Activated T-helper 2 cell treated with anti-CD3 and anti-CD28 coated beads, Interferon-gamma antibody, Interleukin-2, Interleukin-4, amounts not matched to agents 10 μg/mL and 5 μg/mL and 100 μg/mL, durations not matched to agents 14 hours and 24 hours and 36 hours (primary cell): ENCODE measurements at regions of chr6 and their contacts with region 1.

Region 1: DNA sequence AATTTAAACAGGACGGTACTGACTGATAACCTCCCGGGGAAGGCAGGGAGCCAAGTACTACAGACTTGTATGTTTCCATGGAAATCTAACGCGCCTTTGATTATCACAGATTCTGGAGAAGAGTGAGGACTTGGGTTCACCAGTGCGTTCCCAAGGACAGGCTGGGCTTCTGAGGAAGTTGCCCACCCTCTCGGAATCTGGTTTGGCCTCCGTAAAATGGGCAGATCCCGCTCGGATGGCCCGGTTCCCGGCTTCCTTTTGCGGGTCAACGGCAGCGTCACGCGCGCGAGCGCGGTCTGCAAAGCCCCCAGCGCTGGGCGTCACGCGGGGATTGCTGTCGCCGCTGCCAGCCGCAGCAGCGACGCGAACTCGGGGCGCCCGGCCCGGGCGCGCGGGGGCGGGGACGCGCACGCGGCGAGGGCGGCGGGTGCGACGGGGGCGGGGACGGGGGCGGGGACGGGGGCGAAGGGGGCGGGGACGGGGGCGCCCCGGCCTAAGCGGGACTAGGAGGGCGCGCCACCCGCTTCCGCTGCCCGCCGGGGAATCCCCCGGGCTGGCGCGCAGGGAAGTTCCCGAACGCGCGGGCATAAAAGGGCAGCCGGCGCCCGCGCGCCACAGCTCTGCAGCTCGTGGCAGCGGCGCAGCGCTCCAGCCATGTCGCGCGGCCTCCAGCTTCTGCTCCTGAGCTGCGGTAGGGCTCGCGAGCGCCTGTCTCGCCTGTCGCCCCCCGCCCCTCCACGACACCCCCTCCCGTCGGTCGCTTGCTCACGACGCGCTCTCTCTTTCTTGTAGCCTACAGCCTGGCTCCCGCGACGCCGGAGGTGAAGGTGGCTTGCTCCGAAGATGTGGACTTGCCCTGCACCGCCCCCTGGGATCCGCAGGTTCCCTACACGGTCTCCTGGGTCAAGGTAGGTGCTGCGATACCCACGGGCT is at the start of gene CD83:
- DNase-seq: peak; percentile 79
- H3K4me3 Mint-ChIP-seq: peak within 1 kb of the TSS; percentile 97
- H3K27ac Mint-ChIP-seq: peak within 1 kb of the TSS; percentile 87
- H3K4me1 Mint-ChIP-seq: peaks cover 47% of the 10 kb centered on the region
- H3K27me3 Mint-ChIP-seq: peaks cover 6% of the 10 kb centered on the region
- total RNA-seq, gene CD83: 145 and 150 TPM in 2 replicates

Region 2: DNA sequence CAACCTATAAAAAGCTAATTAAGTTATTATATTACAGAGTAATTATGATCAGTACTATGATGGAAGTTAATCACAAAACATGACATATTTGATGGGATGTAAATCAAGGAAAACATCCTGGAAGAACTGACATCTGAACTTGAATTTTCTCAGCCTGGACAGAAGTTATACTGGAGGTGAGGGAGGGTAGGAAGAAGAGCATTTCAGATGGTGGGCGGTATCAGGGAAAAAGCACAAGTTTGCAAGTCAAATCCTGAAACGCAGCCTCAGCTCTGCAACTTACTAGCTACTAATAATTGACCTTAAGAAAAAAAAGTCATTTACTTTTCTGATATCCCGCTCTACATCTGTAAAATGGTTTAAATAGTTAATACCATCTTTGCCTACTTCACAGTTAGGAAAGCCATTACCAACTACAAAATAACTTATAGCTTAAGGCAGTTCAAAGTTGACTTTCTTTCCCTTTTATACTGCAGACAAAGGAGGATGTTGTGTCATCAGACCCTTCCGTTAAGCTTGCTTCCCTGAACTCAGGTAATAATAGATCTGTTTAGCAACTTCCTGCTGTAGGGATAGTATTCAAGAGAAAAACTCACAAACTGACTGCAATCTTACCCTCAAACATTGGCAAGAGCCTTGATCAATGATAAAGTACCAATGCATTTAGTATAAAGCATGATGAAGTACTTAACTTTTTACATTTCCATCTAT is 481.3 kb before region 1 on chr6:
- intact Hi-C with region 1: no loop called
- DNase-seq: no peak
- H3K4me3 Mint-ChIP-seq: no peak overlapping the region
- H3K27ac Mint-ChIP-seq: no peak overlapping the region
- H3K4me1 Mint-ChIP-seq: peaks cover 27% of the 10 kb centered on the region
- H3K27me3 Mint-ChIP-seq: no peaks in the 10 kb centered on the region

Region 3: GRCh38 chr6:13814176-13814937 is 303.1 kb before region 1 on chr6 and contains the start of gene MCUR1:
- intact Hi-C with region 1: loop called (anchors 10 kb)
- DNase-seq: peak; percentile 81
- H3K4me3 Mint-ChIP-seq: peak within 1 kb of the TSS; percentile 90
- H3K27ac Mint-ChIP-seq: peak within 1 kb of the TSS; percentile 77
- H3K4me1 Mint-ChIP-seq: peaks cover 34% of the 10 kb centered on the region
- H3K27me3 Mint-ChIP-seq: peaks cover 11% of the 10 kb centered on the region
- total RNA-seq, gene MCUR1: 39.8 and 41.4 TPM in 2 replicates